ENCODE measurements at regions of chr5 and their contacts with region 1.

Region 1: DNA sequence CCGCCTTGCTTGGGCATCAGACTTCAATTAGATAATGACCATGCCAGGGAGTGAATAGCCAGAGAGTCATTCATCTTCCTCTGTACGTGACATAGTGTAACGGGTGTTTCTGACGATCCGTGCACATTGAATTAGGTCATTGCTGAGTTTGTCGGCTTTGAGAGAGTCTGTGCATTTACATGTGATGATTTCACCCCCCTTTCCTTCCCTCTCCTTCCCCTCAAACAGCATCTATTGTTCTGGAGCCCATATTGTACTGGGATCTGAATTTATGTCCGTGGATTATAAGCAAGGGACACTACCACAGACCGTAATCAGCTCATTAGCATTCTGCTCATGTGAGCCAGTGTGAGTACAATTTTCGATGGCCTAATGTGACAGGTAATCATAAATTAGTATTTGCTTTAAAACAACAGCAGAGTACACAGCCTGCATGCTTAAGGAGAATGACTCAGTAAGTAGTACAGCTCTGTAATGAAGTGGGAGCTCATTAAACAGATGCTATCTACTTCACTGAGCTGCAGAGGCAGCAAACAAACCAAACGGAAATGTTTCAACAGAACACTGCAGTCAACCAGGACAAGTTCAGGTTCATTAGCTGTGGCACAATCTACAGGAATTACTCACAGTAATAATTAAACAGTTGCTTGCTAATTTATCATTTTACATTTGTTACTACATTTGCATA is 302.1 kb downstream of the CSNK1G3 start:
- DNase-seq: no peak
- ATAC-seq: peak; percentile 53 to 85

Region 2: DNA sequence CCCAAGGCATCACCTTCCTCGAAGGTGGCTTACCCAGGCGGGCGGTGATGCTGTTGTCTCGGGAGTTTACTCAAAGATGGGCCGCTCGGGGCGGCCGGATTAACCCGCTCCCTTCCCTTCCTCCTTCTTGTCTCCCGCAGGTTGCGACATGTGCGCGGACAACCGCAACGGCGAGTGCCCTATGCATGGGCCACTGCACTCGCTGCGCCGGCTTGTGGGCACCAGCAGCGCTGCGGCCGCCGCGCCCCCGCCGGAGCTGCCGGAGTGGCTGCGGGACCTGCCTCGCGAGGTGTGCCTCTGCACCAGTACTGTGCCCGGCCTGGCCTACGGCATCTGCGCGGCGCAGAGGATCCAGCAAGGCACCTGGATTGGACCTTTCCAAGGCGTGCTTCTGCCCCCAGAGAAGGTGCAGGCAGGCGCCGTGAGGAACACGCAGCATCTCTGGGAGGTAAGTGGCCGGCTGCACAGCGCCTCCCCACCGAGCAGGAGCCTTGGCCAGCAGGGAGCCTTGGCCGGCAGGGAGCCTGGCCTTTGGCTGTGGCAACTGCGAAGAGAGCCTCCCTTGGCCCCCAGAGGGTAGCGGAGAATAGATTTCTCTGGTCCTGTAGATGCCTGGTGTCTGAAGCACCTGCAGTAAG is 714.4 kb before region 1 on chr5:
- intact Hi-C with region 1: no loop called
- DNase-seq: peak; percentile 33
- ATAC-seq: peak; percentile 73 to 85

Region 3: DNA sequence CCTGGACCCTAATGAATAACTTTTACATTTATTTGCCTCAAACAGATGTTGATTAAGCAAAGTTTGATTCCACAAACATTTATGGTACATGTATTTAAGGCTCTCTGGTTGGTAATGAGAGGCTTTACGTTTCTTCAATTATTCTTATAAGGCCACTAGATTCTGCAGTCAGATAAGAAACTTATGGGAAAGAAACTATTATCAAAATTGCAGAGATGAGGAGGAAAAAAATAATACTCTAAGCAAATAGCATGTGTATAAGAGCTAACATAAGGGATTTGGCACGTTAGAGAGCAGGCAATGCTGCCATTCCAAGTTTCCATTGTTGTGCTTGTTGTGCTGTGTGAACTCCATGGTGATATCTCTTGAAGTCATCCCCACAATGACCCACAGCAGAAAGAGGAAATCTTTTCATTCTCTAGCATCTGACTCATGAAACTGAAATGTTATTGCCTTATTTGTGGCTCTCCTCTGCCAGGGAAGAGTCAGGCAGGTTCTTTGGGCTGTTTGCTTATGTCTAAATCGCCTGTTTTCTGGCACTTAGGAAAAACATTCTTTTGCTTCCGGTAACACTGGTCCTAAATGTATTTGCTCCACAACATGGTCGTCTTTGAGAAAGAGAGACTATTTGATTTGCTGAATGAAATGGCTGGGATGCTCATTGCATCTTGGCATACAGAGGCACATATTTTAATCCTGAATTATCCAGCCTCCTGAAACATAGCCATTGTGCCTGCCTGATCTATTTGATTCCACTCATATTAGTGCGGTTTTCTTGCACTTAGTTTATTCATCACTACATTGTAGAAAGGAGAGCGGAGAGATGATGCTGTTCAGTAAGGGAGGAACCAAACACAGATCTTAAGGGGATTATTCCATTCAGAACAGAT is 113.4 kb before region 1 on chr5:
- intact Hi-C with region 1: loop called in 1 of 2 experiments (anchors 5 kb)
- DNase-seq: peak; percentile 24
- ATAC-seq: peak; percentile 9 to 88

Region 4: GRCh38 chr5:124544366-124545055 is 730.4 kb after region 1 on chr5:
- intact Hi-C with region 1: no loop called
- DNase-seq: no peak
- ATAC-seq: no peak